Posterior vena cava (tissue), 2 donors: ENCODE measurements at regions of chr12 and their contacts with region 1.

Region 1: GRCh38 chr12:6062757-6063735 is 61.4 kb downstream of the VWF start:
- DNase-seq: no peak

Region 2: DNA sequence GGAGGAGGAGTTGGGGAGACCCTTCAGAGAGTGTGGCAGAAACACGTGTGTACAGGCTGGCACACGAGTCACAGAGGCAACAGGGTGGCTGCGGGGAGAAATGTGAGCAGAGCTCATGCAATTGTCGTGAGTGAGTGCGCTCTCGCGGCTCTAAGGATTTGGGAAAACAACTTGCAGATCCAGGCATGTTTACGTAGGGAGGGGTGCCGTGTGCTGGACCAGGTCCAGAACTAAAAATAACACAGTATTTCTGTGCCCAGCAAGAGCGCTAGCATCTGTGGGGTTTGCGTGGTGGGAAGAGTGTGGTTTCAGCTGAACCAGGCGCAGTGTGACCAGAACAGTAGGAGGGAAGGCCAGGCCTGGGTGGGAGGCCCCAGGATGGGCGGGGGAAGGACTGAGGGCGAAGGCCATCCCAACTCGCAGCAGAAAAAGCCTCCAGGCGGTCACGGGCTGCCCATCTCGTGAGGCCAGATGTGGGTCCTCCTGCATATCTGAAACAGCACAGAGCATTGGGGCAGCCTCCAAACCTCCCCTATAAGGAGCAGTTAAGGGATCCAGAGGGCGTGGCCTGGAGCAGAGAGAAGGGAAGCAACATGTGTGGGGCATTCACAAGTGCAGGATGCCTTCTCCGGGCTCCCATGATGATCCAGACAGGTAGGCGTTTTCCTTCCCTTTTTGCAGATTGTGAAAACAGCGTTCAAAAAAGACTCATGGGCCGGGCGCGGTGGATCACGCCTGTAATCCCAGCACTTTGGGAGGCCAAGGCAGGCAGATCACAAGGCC is 119.3 kb after region 1 on chr12:
- intact Hi-C with region 1: loop called (anchors 5 kb)
- DNase-seq: no peak

Region 3: DNA sequence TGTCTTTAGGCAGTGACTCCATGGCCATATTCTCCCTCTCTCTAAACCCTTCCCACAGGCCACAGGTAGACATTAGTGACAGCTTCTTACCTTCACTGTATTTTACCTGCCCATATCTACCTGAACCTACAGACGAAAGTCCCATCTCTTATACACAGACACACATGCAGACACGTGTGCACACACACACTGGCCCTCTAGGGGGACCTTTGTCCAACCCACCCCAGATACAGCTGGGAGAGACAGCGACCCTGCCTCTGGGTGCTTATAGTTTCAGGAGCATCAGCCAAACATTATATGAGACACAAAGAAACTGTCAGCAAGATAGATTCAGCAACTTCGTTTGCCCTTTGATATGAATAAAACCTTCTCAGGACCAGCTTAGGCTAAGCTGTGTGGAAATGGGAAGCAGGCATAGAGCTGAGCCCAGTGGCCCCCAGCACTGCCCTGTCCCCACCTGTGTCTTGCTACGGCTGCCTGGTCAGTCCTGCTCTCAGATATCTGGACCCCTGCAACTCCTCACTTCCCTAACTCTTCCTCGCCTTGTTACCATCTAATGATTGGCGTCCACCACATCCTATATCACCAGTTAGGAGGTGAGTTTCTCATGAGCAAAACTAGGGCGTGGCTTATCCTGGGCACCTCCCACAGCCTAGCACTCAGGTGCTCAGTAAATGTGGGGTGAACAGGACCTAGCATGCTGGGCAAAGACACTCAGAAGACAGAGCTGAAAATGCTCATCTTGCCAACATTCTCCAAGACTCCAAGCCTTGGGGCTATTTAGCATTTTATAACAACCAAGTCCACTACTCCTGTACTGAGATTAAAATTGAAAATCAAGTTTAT is 125.1 kb after region 1 on chr12:
- intact Hi-C with region 1: loop called (anchors 5 kb)
- DNase-seq: no peak

Region 4: DNA sequence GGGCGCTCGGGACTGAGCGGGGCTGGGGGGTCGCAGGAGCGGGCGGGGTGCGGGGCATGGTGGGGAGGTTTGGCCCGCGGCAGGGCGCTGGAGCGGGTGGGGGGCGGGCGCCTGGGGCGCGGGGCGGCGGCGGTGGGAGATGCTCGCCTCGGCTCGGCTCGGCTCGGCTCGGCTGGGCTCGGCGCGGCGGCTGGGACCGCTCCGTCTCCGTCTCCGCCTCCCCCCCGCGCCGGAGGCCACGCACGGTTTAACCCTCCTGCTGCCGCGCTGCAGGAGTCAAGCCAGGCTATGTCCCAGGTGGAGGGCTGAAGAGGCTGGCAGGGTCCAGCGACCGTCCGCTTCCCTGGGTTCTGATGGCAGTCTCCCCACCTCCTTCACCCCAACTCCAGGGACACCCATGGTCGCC is 637.6 kb after region 1 on chr12 and contains the start of gene PIANP:
- intact Hi-C with region 1: no loop called
- DNase-seq: peak; percentile 75
- total RNA-seq, gene PIANP: 0.69 TPM in 1 of 2 donors, not detected in the other